ENCODE measurements at regions of chr19 and their contacts with region 1.

Region 1: GRCh38 chr19:48674921-48675824 is 2.4 kb upstream of the NTN5 start:
- DNase-seq: peak; percentile 83
- ATAC-seq: peak; percentile 85
- H3K4me3 Mint-ChIP-seq: no peak overlapping the region
- H3K27ac Mint-ChIP-seq: no peak overlapping the region
- H3K4me1 Mint-ChIP-seq: peaks cover 6% of the 10 kb centered on the region
- H3K27me3 Mint-ChIP-seq: peaks cover 3% of the 10 kb centered on the region

Region 2: GRCh38 chr19:48543121-48544056 is 131.8 kb before region 1 on chr19:
- CTCF ChIA-PET with region 1: no interaction called
- DNase-seq: no peak
- ATAC-seq: no peak
- H3K4me3 Mint-ChIP-seq: no peak overlapping the region
- H3K27ac Mint-ChIP-seq: no peak overlapping the region
- H3K4me1 Mint-ChIP-seq: no peaks in the 10 kb centered on the region
- H3K27me3 Mint-ChIP-seq: no peaks in the 10 kb centered on the region

Region 3: DNA sequence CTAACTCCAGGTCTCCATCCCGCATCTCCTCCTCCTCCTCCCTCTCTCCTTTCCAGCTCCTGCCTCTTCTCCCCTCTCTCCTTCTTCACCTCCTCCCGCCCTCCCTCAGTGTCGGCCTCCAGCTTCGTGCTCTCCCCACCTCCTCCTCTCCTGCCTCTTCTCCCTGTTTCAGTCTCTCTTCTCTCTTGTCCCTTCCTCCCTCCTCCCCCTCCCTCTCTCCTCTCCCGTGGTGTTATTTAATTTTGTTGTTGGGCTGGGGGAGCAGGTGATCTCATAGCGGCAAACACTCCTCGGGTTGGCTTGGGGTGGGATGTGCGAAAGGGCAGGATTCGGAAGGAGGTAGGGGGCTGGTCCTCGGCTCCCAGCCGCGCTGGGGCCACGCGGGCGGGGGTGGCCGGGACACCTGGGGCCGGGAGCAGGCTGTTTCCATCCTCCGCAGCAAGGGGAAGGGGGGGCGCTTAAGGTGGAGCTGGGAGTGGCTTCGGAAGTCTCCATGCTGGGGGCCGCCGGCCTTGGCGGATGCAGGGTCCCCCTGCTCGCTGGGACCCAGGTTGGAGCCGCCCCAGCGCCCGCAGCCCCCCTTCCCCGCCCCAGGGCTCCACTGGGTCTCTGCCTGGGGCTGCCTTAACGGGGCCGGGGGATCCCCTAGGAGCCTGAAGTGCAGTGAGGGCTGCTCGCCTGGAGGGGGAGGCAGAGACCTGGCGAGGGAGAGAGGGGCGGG is 29.0 kb before region 1 on chr19 and contains the start of gene CA11:
- CTCF ChIA-PET with region 1: interaction called, 19 read pairs
- DNase-seq: peak; percentile 94
- ATAC-seq: peak; percentile 90
- H3K4me3 Mint-ChIP-seq: peak within 1 kb of the TSS; percentile 74
- H3K27ac Mint-ChIP-seq: peak within 1 kb of the TSS; percentile 77
- H3K4me1 Mint-ChIP-seq: peaks cover 33% of the 10 kb centered on the region
- H3K27me3 Mint-ChIP-seq: peaks cover 2% of the 10 kb centered on the region
- total RNA-seq, gene CA11: 6.0 to 7.2 TPM

Region 4: DNA sequence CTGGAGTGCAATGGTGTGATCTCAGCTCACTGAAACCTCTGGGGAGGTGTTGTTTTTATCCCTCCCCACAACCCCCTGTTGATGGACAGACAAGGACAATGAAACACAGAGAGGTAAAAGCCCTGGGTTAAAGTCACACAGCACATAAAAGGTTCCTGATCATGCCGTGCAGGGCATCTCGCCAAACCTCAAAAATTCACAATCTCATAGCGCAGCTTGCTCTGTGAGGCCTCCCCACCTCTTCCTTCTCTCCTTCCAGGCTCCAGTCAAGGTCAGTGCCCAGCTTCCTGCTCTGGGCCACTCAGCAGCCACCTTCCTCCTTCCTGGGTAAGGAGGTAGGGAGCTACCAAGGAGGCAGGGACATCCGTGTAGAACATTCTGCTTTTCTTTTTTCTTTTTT is 22.9 kb after region 1 on chr19:
- CTCF ChIA-PET with region 1: interaction called, 10 read pairs
- DNase-seq: no peak
- ATAC-seq: no peak
- H3K4me3 Mint-ChIP-seq: no peak overlapping the region
- H3K27ac Mint-ChIP-seq: no peak overlapping the region
- H3K4me1 Mint-ChIP-seq: peaks cover 5% of the 10 kb centered on the region
- H3K27me3 Mint-ChIP-seq: peaks cover 16% of the 10 kb centered on the region

Measured in activated CD8-positive, alpha-beta memory T cell treated with anti-CD3 and anti-CD28 coated beads, Interleukin-2, amount 10 ng/mL, durations not matched to agents 7 days and 5 days (primary cell).